ENCODE measurements at regions of chr7 and their contacts with region 1.

Region 1: GRCh38 chr7:100506356-100506923 is 22.7 kb downstream of the NYAP1 start:
- DNase-seq: no peak
- ATAC-seq: no peak
- H3K4me3 ChIP-seq: no peak overlapping the region
- H3K4me3 Mint-ChIP-seq: no peak overlapping the region
- H3K27ac ChIP-seq: no peak overlapping the region
- H3K27ac Mint-ChIP-seq: no peak overlapping the region
- H3K4me1 ChIP-seq: no peaks in the 10 kb centered on the region
- H3K4me1 Mint-ChIP-seq: peaks cover 2% of the 10 kb centered on the region
- H3K27me3 ChIP-seq: no peaks in the 10 kb centered on the region
- H3K27me3 Mint-ChIP-seq: no peaks in the 10 kb centered on the region
- CTCF ChIP-seq: no peak

Region 2: GRCh38 chr7:99642027-99642426 is 864.4 kb before region 1 on chr7:
- CTCF ChIA-PET with region 1: no interaction called
- POLR2A ChIA-PET with region 1: no interaction called
- intact Hi-C with region 1: no loop called
- DNase-seq: no peak
- ATAC-seq: no peak
- H3K4me3 ChIP-seq: no peak overlapping the region
- H3K4me3 Mint-ChIP-seq: no peak overlapping the region
- H3K27ac ChIP-seq: no peak overlapping the region
- H3K27ac Mint-ChIP-seq: peak overlapping the region; percentile 7
- H3K4me1 ChIP-seq: no peaks in the 10 kb centered on the region
- H3K4me1 Mint-ChIP-seq: peaks cover 8% of the 10 kb centered on the region
- H3K27me3 ChIP-seq: no peaks in the 10 kb centered on the region
- H3K27me3 Mint-ChIP-seq: no peaks in the 10 kb centered on the region
- CTCF ChIP-seq: no peak

Region 3: GRCh38 chr7:100489824-100490223 is 16.6 kb before region 1 on chr7:
- CTCF ChIA-PET with region 1: interaction called, 5 read pairs
- POLR2A ChIA-PET with region 1: interaction called, 3 read pairs
- intact Hi-C with region 1: loop called in 1 of 2 experiments (anchors 2 kb)
- DNase-seq: peak in 4 of 9 experiments; percentile 24 to 66 (median 49)
- ATAC-seq: no peak
- H3K4me3 ChIP-seq: no peak overlapping the region
- H3K4me3 Mint-ChIP-seq: no peak overlapping the region
- H3K27ac ChIP-seq: no peak overlapping the region
- H3K27ac Mint-ChIP-seq: no peak overlapping the region
- H3K4me1 ChIP-seq: peaks cover 12% of the 10 kb centered on the region
- H3K4me1 Mint-ChIP-seq: peaks cover 15% of the 10 kb centered on the region
- H3K27me3 ChIP-seq: no peaks in the 10 kb centered on the region
- H3K27me3 Mint-ChIP-seq: no peaks in the 10 kb centered on the region
- CTCF ChIP-seq: no peak

Region 4: GRCh38 chr7:100921039-100921438 is 414.6 kb after region 1 on chr7:
- CTCF ChIA-PET with region 1: no interaction called
- POLR2A ChIA-PET with region 1: no interaction called
- intact Hi-C with region 1: no loop called
- DNase-seq: no peak
- ATAC-seq: no peak
- H3K4me3 ChIP-seq: no peak overlapping the region
- H3K4me3 Mint-ChIP-seq: no peak overlapping the region
- H3K27ac ChIP-seq: no peak overlapping the region
- H3K27ac Mint-ChIP-seq: no peak overlapping the region
- H3K4me1 ChIP-seq: no peaks in the 10 kb centered on the region
- H3K4me1 Mint-ChIP-seq: no peaks in the 10 kb centered on the region
- H3K27me3 ChIP-seq: no peaks in the 10 kb centered on the region
- H3K27me3 Mint-ChIP-seq: peaks cover 19% of the 10 kb centered on the region
- CTCF ChIP-seq: no peak